ENCODE measurements at regions of chr6 and their contacts with region 1.

Region 1: DNA sequence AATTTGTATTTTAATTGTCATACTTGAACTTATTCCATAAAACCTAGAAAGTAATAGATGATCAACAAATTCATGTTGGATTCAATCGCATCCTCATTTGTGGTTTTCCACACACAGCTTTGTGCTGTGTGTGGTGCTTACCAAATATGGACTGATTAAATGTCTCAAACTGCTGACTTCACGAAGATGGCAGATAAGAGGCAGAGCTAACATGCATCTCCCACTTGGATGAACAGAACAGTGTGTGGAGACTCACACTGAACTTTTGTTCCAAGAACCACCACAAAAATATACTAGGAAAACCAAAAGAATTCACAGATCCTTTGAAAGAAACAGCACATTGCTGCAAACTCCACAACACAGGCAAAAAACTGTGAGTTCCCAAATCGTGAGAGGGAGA is 603.7 kb downstream of the TENT5A start:
- DNase-seq: no peak
- ATAC-seq: no peak
- H3K4me3 ChIP-seq: no peak overlapping the region
- H3K4me3 Mint-ChIP-seq: no peak overlapping the region
- H3K27ac ChIP-seq: no peak overlapping the region
- H3K27ac Mint-ChIP-seq: no peak overlapping the region
- H3K4me1 ChIP-seq: no peaks in the 10 kb centered on the region
- H3K4me1 Mint-ChIP-seq: no peaks in the 10 kb centered on the region
- H3K27me3 ChIP-seq: no peaks in the 10 kb centered on the region
- H3K27me3 Mint-ChIP-seq: no peaks in the 10 kb centered on the region

Region 2: GRCh38 chr6:81138236-81138635 is 10.5 kb before region 1 on chr6:
- CTCF ChIA-PET with region 1: interaction called in 1 of 2 experiments, 11 read pairs
- POLR2A ChIA-PET with region 1: no interaction called
- DNase-seq: no peak
- ATAC-seq: no peak
- H3K4me3 ChIP-seq: no peak overlapping the region
- H3K4me3 Mint-ChIP-seq: no peak overlapping the region
- H3K27ac ChIP-seq: no peak overlapping the region
- H3K27ac Mint-ChIP-seq: no peak overlapping the region
- H3K4me1 ChIP-seq: no peaks in the 10 kb centered on the region
- H3K4me1 Mint-ChIP-seq: no peaks in the 10 kb centered on the region
- H3K27me3 ChIP-seq: peaks cover 0 to 3% of the 10 kb centered on the region in 2 experiments
- H3K27me3 Mint-ChIP-seq: no peaks in the 10 kb centered on the region

Region 3: DNA sequence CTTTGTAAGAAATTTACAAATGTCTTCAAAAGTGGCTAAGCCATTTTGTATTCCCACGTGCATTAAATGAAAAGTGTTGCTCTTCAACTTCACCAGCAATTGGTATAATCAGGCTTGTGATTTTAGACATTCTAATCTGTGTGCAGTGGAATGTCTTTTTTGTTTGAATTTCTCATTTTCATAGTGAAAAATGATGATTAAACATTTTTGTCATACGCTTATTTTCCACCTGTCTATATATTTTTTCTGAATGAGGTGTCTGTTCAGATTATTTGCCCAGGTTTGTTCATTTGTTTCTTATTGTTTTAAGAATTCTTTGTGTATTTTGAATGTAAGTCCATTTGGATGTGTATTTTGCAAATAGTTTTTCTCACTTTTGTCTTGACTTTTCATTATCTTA is 45.6 kb after region 1 on chr6:
- CTCF ChIA-PET with region 1: no interaction called
- POLR2A ChIA-PET with region 1: no interaction called
- DNase-seq: no peak
- ATAC-seq: no peak
- H3K4me3 ChIP-seq: no peak overlapping the region
- H3K4me3 Mint-ChIP-seq: no peak overlapping the region
- H3K27ac ChIP-seq: no peak overlapping the region
- H3K27ac Mint-ChIP-seq: no peak overlapping the region
- H3K4me1 ChIP-seq: no peaks in the 10 kb centered on the region
- H3K4me1 Mint-ChIP-seq: no peaks in the 10 kb centered on the region
- H3K27me3 ChIP-seq: no peaks in the 10 kb centered on the region
- H3K27me3 Mint-ChIP-seq: no peaks in the 10 kb centered on the region

Region 4: DNA sequence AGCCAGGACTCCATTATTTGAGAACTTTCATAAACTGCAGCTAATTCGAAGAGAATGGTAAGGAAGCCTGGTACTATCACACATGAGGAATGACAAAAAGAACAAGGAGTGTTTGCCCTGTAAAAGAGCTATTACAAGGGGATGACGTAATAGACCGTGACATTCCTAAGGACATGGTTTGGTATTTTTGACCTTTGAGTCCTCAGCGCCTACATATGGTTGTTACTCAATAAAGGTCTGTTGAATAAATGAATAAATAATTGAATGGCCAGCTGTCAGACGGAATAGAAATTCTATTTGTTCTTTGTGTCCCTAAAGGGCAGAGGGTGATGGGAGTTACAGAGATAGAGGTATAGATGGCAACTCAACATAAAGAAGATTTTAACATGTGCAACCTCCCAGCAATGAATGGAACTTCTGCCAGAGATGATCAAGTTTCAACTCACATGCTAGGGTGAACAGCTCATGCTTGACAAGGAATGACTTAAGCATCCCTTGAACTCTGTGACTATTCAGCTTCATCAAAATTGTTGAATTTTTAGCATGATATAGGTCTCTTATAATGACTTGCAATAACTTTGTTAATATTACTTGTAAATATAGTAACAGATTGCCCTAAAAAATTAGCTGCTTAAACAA is 488.3 kb after region 1 on chr6:
- CTCF ChIA-PET with region 1: no interaction called
- POLR2A ChIA-PET with region 1: no interaction called
- DNase-seq: no peak
- ATAC-seq: no peak
- H3K4me3 ChIP-seq: no peak overlapping the region
- H3K4me3 Mint-ChIP-seq: no peak overlapping the region
- H3K27ac ChIP-seq: no peak overlapping the region
- H3K27ac Mint-ChIP-seq: no peak overlapping the region
- H3K4me1 ChIP-seq: no peaks in the 10 kb centered on the region
- H3K4me1 Mint-ChIP-seq: no peaks in the 10 kb centered on the region
- H3K27me3 ChIP-seq: no peaks in the 10 kb centered on the region
- H3K27me3 Mint-ChIP-seq: no peaks in the 10 kb centered on the region